ENCODE measurements at regions of chr4 and their contacts with region 1.

Region 1: DNA sequence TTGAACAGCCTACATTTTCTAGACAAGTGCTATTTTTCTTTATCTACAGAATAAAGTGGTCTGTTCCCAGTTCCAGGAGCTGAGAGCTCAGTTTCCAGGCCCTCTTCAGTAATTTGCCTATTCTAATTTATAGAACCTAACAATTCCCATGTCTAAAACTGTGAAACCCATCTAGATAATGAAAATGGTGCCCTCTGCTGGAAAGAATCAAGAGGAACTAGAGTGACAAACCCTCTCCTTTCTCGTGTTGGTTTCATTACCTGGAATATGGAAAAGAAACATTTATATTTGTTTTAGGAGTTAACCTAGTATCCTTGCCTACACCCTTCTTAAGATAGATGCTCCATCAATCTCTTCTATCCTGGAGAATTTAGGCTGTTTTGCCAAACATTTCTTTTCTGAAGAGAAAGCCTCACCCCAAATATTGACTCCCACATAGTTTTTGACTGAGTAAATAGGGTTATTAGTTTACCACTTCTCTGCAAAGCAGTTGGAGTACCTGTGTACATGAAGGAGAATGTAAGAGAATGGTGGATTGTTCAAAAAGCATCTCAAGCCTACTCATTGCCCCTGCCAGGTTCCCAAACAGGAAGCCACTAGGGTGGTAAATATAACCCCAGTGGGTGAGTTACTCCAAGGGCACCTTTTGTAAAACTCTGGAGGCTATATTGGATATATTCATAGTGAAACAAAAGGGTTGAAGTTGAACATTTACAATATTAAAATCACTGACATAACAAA is 121.6 kb downstream of the RASL11B start:
- DNase-seq: peak; percentile 75
- H3K4me3 Mint-ChIP-seq: no peak overlapping the region
- H3K27ac Mint-ChIP-seq: no peak overlapping the region
- H3K4me1 Mint-ChIP-seq: peaks cover 6% of the 10 kb centered on the region
- H3K27me3 Mint-ChIP-seq: no peaks in the 10 kb centered on the region

Region 2: GRCh38 chr4:52376132-52376704 is 607.5 kb before region 1 on chr4:
- intact Hi-C with region 1: loop called (anchors 1 kb)
- DNase-seq: peak; percentile 66
- H3K4me3 Mint-ChIP-seq: no peak overlapping the region
- H3K27ac Mint-ChIP-seq: no peak overlapping the region
- H3K4me1 Mint-ChIP-seq: no peaks in the 10 kb centered on the region
- H3K27me3 Mint-ChIP-seq: peaks cover 9% of the 10 kb centered on the region

Region 3: DNA sequence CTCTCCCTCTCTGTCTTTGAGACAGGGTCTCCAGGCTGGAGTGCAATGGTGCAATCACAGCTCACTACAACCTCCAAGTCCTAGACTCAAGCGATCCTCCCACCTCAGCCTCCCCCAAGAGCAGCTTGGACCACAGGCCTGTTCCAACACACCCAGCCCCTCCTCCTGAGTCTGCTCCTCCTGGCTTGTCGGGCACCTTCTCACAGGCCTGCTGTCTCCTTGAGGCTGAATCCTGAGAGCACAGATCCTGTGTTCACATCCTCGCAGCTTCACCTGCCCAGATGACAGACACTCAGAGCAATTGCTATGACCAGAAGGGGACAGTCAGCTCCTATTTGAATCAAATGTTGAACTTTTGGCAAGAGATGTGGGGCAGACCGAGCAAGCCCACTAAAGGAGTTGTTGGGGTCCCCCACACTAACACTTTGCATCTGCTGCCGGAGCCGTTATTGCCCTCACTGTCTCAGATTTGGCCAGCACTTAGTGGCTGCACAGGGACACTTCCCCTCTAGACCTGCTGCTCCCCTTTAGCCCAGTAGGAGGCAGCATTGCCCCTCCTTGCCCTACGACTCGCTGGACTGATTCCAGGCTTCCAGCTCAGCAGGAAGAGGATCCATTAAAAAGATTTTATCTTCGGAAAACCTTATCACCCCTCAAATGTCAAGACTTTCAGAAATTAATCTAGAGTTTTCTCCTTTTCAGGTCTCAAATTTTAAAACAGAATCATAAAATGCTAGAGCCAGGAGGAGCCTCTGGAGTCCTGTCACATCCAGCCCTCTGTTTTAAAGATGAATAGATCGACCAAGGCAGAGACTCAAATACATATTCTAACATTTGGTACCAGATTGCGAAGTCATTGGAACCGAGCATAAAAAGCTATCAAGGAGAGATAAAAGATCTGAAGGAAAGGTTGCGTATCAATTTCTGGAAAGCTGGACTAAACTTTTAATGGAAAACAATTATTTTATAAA is 438.3 kb before region 1 on chr4:
- intact Hi-C with region 1: loop called (anchors 2 kb)
- DNase-seq: peak; percentile 88
- H3K4me3 Mint-ChIP-seq: no peak overlapping the region
- H3K27ac Mint-ChIP-seq: no peak overlapping the region
- H3K4me1 Mint-ChIP-seq: no peaks in the 10 kb centered on the region
- H3K27me3 Mint-ChIP-seq: peaks cover 3% of the 10 kb centered on the region

Region 4: GRCh38 chr4:52712172-52712990 is 271.4 kb before region 1 on chr4:
- intact Hi-C with region 1: loop called (anchors 5 kb)
- DNase-seq: peak; percentile 99
- H3K4me3 Mint-ChIP-seq: peak overlapping the region; percentile 98
- H3K27ac Mint-ChIP-seq: peak overlapping the region; percentile 99
- H3K4me1 Mint-ChIP-seq: peaks cover 48% of the 10 kb centered on the region
- H3K27me3 Mint-ChIP-seq: no peaks in the 10 kb centered on the region

Region 5: GRCh38 chr4:52780206-52780605 is 203.5 kb before region 1 on chr4:
- intact Hi-C with region 1: no loop called
- DNase-seq: no peak
- H3K4me3 Mint-ChIP-seq: no peak overlapping the region
- H3K27ac Mint-ChIP-seq: no peak overlapping the region
- H3K4me1 Mint-ChIP-seq: no peaks in the 10 kb centered on the region
- H3K27me3 Mint-ChIP-seq: no peaks in the 10 kb centered on the region